ENCODE measurements at regions of chr12 and their contacts with region 1.

Region 1: GRCh38 chr12:66107451-66107915 is 23.1 kb downstream of the LLPH start:
- H3K4me3 ChIP-seq: no peak overlapping the region
- H3K27ac ChIP-seq: 0 out of 2 replicates have a peak overlapping the region, but pooled peaks have one; percentile 25
- H3K4me1 ChIP-seq: peaks cover 5% of the 10 kb centered on the region; the same call in 1 of the 2 replicates
- CTCF ChIP-seq: peak; percentile 61; the same call in 1 of the 2 replicates

Region 2: DNA sequence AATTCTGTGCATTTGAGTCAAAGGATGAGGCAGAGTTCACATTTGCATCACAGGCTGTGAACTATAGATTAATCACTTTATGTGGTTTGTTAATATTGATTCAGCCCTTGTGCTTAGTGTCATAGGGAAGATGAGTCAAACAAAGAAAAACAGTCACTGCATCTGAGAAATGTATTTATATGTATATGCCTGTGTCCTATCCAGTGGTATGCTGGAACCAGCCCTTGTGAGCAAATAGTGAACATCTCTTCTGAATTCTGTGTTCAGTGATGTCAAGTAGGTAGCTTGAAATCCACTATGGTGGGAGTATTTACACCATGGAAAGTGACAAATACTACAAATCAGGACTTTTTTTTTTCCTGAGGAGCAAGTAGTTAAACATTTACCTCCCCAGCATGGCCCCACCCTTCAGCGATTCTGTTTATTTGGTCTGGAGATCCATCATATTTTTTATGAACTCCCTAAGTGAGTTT is 154.7 kb before region 1 on chr12:
- CTCF ChIA-PET with region 1: no interaction called
- POLR2A ChIA-PET with region 1: no interaction called
- H3K4me3 ChIP-seq: no peak overlapping the region
- H3K27ac ChIP-seq: no peak overlapping the region
- H3K4me1 ChIP-seq: peaks cover 23% of the 10 kb centered on the region
- CTCF ChIP-seq: no peak

Region 3: DNA sequence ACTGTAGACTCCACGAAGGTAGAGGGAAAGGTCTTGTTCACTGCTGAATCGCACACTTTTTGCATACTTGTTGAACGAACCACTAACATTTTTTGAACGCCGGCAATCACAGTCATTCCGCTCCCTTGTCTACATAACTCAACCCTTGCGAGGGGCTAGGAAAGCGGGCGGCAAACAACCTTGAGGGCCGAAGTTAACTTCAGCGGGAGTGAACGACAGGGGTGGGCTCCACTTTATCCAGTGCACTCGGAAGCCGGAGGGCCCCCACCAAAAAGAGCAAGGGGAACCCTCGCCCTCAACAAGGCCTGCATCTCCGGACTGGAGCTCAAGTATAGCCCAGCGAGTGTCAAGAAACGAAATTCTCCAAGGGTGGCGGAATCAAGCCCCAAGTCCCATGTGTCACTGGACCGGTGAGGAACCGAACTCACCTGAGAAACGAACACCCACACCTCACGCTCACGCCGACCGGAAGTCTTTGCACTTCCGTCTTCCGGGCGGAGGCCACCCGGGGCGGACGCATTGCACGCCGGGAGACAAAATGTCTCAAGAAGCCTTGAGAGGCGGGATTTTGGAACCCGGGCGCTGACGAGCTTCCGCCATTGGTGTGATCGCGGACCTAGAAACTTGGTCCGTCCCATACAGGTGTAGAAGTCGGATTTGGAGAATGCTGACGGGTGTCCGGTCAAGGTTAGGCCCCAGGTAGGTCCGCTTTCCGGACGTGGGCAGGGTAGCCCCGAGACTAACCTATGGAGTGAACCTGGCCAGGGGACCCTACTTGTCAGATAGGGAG is 23.0 kb after region 1 on chr12 and contains the start of gene LLPH:
- CTCF ChIA-PET with region 1: interaction called, 12 read pairs
- POLR2A ChIA-PET with region 1: no interaction called
- H3K4me3 ChIP-seq: peak within 1 kb of the TSS; percentile 99
- H3K27ac ChIP-seq: peak within 1 kb of the TSS; percentile 70
- H3K4me1 ChIP-seq: no peaks in the 10 kb centered on the region
- CTCF ChIP-seq: no peak

Region 4: DNA sequence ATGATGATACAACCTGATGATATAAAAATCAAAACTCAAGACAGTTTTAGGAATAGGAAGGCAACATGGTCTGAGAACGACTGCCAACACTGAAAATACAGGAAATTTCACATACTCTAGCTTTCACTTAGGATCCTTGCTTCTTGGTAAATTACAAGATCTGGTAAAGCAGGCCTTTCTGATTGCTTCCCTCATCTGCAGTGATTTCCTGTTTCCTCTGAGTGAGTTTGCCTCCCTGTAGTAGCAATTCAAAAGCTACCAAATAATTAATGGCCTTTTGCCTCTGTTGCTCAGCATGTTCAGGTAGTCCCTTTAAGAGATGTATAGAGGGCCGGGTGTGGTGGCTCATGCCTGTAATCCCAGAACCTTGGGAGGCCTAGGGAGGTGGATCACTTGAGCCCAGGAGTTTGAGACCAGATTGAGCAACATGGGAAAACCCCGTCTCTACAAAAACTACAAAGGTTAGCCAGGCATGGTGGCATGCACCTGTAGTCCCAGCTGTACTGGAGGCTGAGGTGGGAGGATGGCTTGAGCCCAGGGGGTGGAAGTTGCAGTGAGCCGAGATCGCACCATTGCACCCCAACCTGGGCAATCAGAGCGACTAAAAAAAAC is 79.7 kb after region 1 on chr12:
- CTCF ChIA-PET with region 1: no interaction called
- POLR2A ChIA-PET with region 1: no interaction called
- H3K4me3 ChIP-seq: no peak overlapping the region
- H3K27ac ChIP-seq: no peak overlapping the region
- H3K4me1 ChIP-seq: peaks cover 11% of the 10 kb centered on the region; the same call in 1 of the 2 replicates
- CTCF ChIP-seq: no peak